ENCODE measurements at regions of chr3 and their contacts with region 1.

Region 1: GRCh38 chr3:53375019-53375418 is 27.7 kb upstream of the DCP1A start:
- DNase-seq: peak; percentile 74
- ATAC-seq: peak; percentile 97
- H3K4me3 ChIP-seq: no peak overlapping the region
- H3K27ac ChIP-seq: no peak overlapping the region
- H3K4me1 ChIP-seq: no peaks in the 10 kb centered on the region
- H3K27me3 ChIP-seq: peaks cover 23% of the 10 kb centered on the region
- CTCF ChIP-seq: peak; percentile 90

Region 2: GRCh38 chr3:53303957-53304356 is 71.1 kb before region 1 on chr3:
- CTCF ChIA-PET with region 1: no interaction called
- POLR2A ChIA-PET with region 1: no interaction called
- intact Hi-C with region 1: loop called (anchors 2 kb)
- DNase-seq: no peak
- ATAC-seq: no peak
- H3K4me3 ChIP-seq: no peak overlapping the region
- H3K27ac ChIP-seq: no peak overlapping the region
- H3K4me1 ChIP-seq: no peaks in the 10 kb centered on the region
- H3K27me3 ChIP-seq: no peaks in the 10 kb centered on the region
- CTCF ChIP-seq: no peak

Region 3: GRCh38 chr3:53658613-53659193 is 283.7 kb after region 1 on chr3:
- CTCF ChIA-PET with region 1: no interaction called
- POLR2A ChIA-PET with region 1: no interaction called
- intact Hi-C with region 1: no loop called
- DNase-seq: no peak
- ATAC-seq: no peak
- H3K4me3 ChIP-seq: no peak overlapping the region
- H3K27ac ChIP-seq: no peak overlapping the region
- H3K4me1 ChIP-seq: no peaks in the 10 kb centered on the region
- H3K27me3 ChIP-seq: peaks cover 54% of the 10 kb centered on the region
- CTCF ChIP-seq: no peak